G401 (cell line): ENCODE measurements at regions of chr5 and their contacts with region 1.

Region 1: GRCh38 chr5:175729829-175730277 is 72.0 kb downstream of the HRH2 start:
- DNase-seq: peak; percentile 97

Region 2: DNA sequence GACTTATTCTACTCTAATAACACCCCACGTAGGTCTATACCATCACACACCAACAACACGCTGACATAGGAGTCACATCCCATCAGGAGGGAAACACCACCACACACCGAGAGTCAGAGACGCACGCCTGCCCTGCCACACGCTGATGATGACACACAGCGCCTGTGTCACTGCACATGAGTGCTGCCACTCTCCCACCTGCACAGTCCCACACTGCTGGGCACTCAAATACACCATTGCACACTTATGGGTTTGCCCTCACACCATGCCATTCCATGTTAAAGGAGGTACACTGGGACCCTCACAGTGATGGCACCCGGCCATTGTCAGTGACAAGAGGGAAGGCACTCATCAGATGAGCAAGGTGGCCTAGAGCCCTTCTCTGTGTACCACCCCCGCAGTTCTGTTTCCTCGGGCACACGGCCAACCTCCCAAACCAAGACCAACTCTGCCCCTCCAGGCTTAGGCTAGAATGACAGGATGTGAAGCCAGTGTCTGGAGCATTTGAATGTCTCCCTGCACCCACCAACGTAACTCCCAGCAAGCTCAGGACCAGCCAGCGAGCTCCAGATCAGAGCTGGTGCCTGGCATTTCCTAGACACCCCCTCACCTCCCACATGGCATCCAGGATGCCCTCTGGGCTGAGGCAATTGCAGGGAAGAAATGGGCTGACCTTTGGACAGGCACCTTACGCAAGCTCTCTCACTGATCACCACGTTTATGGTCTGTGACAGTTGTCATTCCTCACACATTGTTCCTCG is 137.9 kb after region 1 on chr5:
- in situ Hi-C with region 1: loop called (anchors 25 kb)
- DNase-seq: peak; percentile 89